ENCODE measurements at regions of chr2 and their contacts with region 1.

Region 1: GRCh38 chr2:200695191-200695590 is 109.4 kb downstream of the AOX1 start:
- DNase-seq: no peak
- ATAC-seq: no peak
- H3K4me3 ChIP-seq: no peak overlapping the region
- H3K27ac ChIP-seq: no peak overlapping the region
- H3K4me1 ChIP-seq: peaks cover 6% of the 10 kb centered on the region; the same call in 1 of the 2 replicates
- H3K27me3 ChIP-seq: peaks cover 5% of the 10 kb centered on the region
- CTCF ChIP-seq: no peak
- POLR2A ChIP-seq: no peak
- RAD21 ChIP-seq: no peak

Region 2: DNA sequence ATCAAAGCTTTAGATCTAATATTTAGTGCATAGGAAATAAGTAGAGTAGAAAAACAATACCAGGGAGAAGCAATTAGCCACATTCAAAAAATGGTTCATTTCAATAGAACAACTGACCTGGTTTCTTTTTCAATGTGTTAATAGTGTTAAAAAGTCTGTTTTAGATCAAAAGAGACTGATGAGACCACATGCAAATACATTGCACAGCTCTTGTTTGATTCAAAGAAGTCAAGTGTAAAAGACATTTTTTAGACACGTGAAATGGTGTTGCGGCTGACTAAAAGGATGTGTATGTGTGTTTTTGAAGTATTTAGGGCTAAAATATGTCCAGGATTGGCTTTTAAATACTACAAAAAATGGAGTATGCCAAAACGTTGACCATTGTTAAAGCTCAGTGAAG is 110.6 kb before region 1 on chr2:
- CTCF ChIA-PET with region 1: no interaction called
- POLR2A ChIA-PET with region 1: no interaction called
- dilution Hi-C with region 1: no loop called
- in situ Hi-C with region 1: loop called (anchors 5 kb)
- intact Hi-C with region 1: no loop called
- DNase-seq: no peak
- ATAC-seq: no peak
- H3K4me3 ChIP-seq: no peak overlapping the region
- H3K27ac ChIP-seq: no peak overlapping the region
- H3K4me1 ChIP-seq: no peaks in the 10 kb centered on the region
- H3K27me3 ChIP-seq: no peaks in the 10 kb centered on the region; the same call in 1 of the 2 replicates
- CTCF ChIP-seq: no peak
- POLR2A ChIP-seq: no peak
- RAD21 ChIP-seq: no peak

Region 3: DNA sequence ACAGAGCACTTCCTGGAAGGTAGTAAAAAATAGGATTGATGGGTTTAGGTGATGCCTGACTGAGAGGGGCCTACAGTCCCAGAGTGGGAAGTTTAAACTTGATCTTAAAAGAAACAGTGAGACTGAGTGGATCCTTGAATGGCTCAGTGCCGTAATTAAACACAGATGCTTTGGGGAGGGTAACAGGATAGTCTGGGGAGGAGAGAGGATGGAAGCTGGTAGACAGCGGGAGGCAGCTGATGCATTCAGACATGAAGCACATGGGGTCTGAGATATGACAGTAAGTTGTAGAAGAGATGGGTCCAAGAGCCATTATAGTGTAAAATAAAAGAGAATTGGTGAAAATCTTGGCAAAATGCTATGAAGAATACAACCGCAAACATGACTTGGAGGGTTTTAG is 55.0 kb before region 1 on chr2:
- CTCF ChIA-PET with region 1: no interaction called
- POLR2A ChIA-PET with region 1: no interaction called
- dilution Hi-C with region 1: no loop called
- in situ Hi-C with region 1: no loop called
- intact Hi-C with region 1: no loop called
- DNase-seq: no peak
- ATAC-seq: no peak
- H3K4me3 ChIP-seq: no peak overlapping the region
- H3K27ac ChIP-seq: no peak overlapping the region
- H3K4me1 ChIP-seq: no peaks in the 10 kb centered on the region; the same call in 1 of the 2 replicates
- H3K27me3 ChIP-seq: no peaks in the 10 kb centered on the region
- CTCF ChIP-seq: no peak
- POLR2A ChIP-seq: no peak
- RAD21 ChIP-seq: no peak

Measured in IMR-90 (cell line).